AG04450 (cell line): ENCODE measurements at regions of chr7 and their contacts with region 1.

Region 1: DNA sequence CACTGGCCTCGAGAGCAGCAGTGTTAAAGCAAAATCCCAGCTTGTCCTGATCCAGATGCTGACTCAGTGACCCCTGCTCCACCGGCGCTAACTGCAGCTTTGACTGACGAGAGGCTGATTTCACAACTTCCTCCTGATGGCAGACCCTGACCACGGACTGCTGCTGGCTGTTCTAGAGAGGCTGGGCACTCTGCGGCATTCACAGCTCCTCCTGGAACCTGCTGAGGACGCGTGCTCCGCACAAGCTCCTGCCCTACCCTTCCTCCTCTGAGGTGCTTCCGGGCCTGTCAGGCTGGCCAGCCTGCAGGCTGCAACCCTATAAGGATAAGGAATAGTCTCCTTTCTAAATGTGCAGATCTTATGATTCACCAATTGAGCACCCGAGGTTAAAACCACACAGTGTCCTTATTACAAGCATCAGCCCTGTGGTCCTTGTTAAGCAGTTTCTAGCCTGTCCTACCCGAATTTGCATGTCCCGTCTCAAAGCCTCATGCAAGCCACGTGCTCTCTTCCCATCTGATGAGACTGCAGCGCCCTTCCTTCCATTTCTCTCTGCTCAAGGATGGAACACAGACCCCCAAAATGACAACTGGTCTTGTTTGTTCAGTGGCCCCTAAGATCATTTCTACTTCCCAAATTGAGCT is 35.5 kb upstream of the NCAPG2 start:
- DNase-seq: peak; percentile 68
- H3K4me3 ChIP-seq: peak overlapping the region; percentile 7
- H3K27ac ChIP-seq: peak overlapping the region; percentile 95
- H3K27me3 ChIP-seq: no peaks in the 10 kb centered on the region
- CTCF ChIP-seq: no peak

Region 2: GRCh38 chr7:158473221-158473620 is 266.9 kb before region 1 on chr7:
- CTCF ChIA-PET with region 1: no interaction called
- POLR2A ChIA-PET with region 1: no interaction called
- DNase-seq: no peak
- H3K4me3 ChIP-seq: no peak overlapping the region
- H3K27ac ChIP-seq: no peak overlapping the region
- H3K27me3 ChIP-seq: no peaks in the 10 kb centered on the region
- CTCF ChIP-seq: no peak

Region 3: GRCh38 chr7:158753900-158754299 is 13.8 kb after region 1 on chr7:
- CTCF ChIA-PET with region 1: interaction called, 14 read pairs
- POLR2A ChIA-PET with region 1: interaction called, 3 read pairs
- DNase-seq: no peak
- H3K4me3 ChIP-seq: no peak overlapping the region
- H3K27ac ChIP-seq: no peak overlapping the region
- H3K27me3 ChIP-seq: no peaks in the 10 kb centered on the region
- CTCF ChIP-seq: no peak

Region 4: DNA sequence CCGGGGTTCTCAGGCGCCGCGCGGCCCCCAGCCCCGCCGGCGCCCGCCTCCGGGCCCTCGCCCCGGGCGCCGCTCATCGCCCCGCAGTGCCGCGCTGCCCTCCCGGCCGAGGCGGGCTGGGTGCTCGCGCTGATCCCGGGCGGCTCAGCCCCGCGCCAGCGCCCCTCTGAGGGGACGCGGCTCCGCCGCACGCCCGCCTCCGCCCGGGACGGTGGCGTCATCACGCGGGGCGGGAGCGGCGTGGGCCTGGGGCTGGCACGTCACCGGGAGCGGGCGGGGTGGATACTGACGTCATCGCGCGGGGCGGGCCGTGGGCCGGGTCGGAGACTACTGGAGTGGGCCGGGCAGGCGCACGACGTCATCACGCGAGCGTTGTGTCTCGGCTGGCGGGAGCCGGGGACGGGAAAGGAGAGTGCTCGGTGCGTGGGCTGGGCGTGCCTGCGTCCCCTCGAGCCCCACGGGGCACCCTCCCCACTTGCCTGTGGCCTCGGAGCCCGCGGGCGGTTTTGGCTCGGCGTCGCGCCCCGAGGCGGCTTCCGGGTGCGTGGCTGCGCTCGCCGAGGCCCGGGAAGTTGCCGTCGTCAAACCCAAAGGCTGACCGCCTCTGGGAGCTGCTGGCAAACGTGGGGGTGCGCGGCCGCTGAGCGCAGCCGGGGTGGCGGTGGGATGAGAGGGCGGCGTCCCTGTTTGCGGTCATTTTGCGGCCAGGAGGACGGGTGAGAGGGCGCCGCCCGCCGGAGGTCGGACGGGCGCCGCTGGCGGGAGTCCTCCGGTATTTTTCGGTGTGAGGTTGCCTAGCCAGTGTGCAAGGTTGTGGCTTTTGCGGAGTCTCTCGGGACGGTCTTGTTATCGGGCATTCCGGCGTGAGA is 89.4 kb after region 1 on chr7 and contains the start of gene ESYT2:
- CTCF ChIA-PET with region 1: interaction called, 5 read pairs
- POLR2A ChIA-PET with region 1: interaction called, 10 read pairs
- DNase-seq: peak; percentile 89
- H3K4me3 ChIP-seq: peak within 1 kb of the TSS; percentile 88
- H3K27ac ChIP-seq: peak within 1 kb of the TSS; percentile 81
- H3K27me3 ChIP-seq: no peaks in the 10 kb centered on the region
- CTCF ChIP-seq: peak; percentile 21; the same call in 1 of the 2 replicates
- polyA plus RNA-seq, gene ESYT2: 46.9 and 54.3 TPM in 2 replicates

Region 5: GRCh38 chr7:159097661-159098423 is 357.7 kb after region 1 on chr7:
- CTCF ChIA-PET with region 1: no interaction called
- POLR2A ChIA-PET with region 1: no interaction called
- DNase-seq: no peak
- H3K4me3 ChIP-seq: no peak overlapping the region
- H3K27ac ChIP-seq: no peak overlapping the region
- H3K27me3 ChIP-seq: no peaks in the 10 kb centered on the region
- CTCF ChIP-seq: no peak